ENCODE measurements at regions of chr17 and their contacts with region 1.

Region 1: GRCh38 chr17:48335858-48336500 is 94.0 kb downstream of the SKAP1 start:
- DNase-seq: no peak
- H3K4me3 ChIP-seq: no peak overlapping the region
- H3K27ac ChIP-seq: no peak overlapping the region
- H3K4me1 ChIP-seq: no peaks in the 10 kb centered on the region
- H3K27me3 ChIP-seq: peaks cover 13% of the 10 kb centered on the region
- CTCF ChIP-seq: peak; percentile 36 to 72 (median 54)
- POLR2A ChIP-seq: no peak

Region 2: GRCh38 chr17:48295362-48296288 is 40.4 kb before region 1 on chr17:
- intact Hi-C with region 1: no loop called
- DNase-seq: no peak
- H3K4me3 ChIP-seq: no peak overlapping the region
- H3K27ac ChIP-seq: peak overlapping the region in 1 of 3 donors; percentile 57
- H3K4me1 ChIP-seq: no peaks in the 10 kb centered on the region
- H3K27me3 ChIP-seq: no peaks in the 10 kb centered on the region
- CTCF ChIP-seq: no peak
- POLR2A ChIP-seq: no peak

Region 3: GRCh38 chr17:48382989-48383388 is 47.0 kb after region 1 on chr17:
- intact Hi-C with region 1: no loop called
- DNase-seq: no peak
- H3K4me3 ChIP-seq: no peak overlapping the region
- H3K27ac ChIP-seq: no peak overlapping the region
- H3K4me1 ChIP-seq: no peaks in the 10 kb centered on the region
- H3K27me3 ChIP-seq: peaks cover 3% of the 10 kb centered on the region
- CTCF ChIP-seq: no peak
- POLR2A ChIP-seq: no peak

Region 4: GRCh38 chr17:48526608-48527546 is 190.9 kb after region 1 on chr17:
- intact Hi-C with region 1: no loop called
- DNase-seq: no peak
- H3K4me3 ChIP-seq: no peak overlapping the region
- H3K27ac ChIP-seq: no peak overlapping the region
- H3K4me1 ChIP-seq: no peaks in the 10 kb centered on the region
- H3K27me3 ChIP-seq: peaks cover 17% of the 10 kb centered on the region
- CTCF ChIP-seq: no peak
- POLR2A ChIP-seq: no peak

Region 5: DNA sequence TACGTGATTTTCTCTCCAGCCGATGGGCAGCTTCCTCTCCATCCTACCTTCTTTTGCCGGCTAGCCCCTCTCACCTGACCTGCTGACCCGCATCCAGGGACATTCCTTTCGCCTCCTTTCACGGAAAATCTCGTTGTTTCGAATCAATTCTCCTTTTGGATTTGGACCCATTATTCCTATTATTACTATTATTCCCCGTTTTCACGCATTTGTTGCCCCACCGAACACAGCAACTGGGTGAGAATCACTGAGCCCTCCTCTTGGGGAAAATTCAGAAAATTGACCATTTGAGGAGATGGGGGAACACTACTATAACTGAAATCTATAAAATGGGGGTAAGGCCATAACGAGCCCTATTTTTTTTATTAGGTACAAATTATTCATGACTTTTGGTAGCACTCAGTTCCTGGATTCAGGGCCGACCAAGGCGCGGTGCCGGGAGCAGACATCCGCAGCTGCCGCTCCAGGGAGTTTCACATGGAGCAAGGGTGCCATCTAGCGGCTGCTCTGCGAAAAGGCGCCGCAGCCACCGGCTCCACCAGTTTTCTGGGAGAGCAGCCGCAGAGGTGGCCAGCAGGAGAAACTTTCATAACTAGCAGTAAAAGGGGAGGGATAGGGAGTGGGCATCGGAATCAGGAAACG is 282.4 kb after region 1 on chr17:
- intact Hi-C with region 1: loop called (anchors 10 kb)
- DNase-seq: peak; percentile 83 to 85
- H3K4me3 ChIP-seq: no peak overlapping the region
- H3K27ac ChIP-seq: no peak overlapping the region
- H3K4me1 ChIP-seq: peaks cover 4 to 12% of the 10 kb centered on the region in 2 donors
- H3K27me3 ChIP-seq: peaks cover 91% of the 10 kb centered on the region
- CTCF ChIP-seq: peak; percentile 92 to 96 (median 95)
- POLR2A ChIP-seq: no peak